AG04450 (cell line): ENCODE measurements at regions of chr11 and their contacts with region 1.

Region 1: GRCh38 chr11:10307442-10308207 is 2.8 kb downstream of the ADM start:
- DNase-seq: peak; percentile 76
- H3K4me3 ChIP-seq: peak overlapping the region; percentile 77
- H3K27ac ChIP-seq: peak overlapping the region; percentile 89
- H3K27me3 ChIP-seq: no peaks in the 10 kb centered on the region
- CTCF ChIP-seq: peak; percentile 94

Region 2: DNA sequence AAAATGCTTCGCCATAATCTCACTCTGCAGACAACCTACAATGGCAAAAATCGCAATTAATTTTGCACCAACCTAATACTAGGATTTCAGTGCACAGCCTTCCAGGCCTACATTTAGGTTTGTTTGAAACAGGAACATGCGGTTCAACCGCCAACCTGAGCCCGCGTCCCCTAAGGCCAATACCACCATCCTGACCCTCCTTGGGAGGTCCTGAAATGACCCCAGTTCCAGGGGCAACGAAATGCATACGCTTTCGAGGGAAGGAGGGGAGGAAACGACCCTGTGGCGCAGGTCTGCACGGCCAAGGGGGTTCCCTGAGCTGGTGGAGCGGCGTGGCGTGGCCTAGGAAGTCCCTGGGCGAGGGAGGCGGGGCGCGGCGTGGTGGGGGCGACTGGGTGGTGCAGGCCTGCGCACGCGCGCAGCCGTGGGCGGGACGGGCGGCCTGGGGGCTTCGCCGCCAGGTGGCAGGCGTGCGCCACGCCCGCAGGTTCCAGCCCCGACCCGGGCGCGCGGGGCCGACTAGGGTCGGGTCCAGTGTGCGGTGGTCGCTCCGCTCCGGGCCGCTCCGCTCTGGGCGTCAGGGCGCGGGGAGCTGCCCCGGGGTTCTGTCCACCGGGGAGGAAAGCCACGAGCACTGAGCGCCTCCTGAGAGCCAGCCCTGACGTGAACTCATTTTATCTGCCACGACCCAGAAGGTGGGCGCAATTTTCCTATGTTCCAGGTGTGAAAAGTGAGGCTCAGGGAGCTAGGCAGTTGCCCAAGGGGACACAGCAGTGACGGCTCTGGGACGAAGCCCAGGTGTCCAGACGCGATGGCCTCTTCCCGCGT is 549.6 kb before region 1 on chr11:
- CTCF ChIA-PET with region 1: interaction called, 3 read pairs
- POLR2A ChIA-PET with region 1: interaction called, 65 read pairs
- DNase-seq: no peak
- H3K4me3 ChIP-seq: peak overlapping the region; percentile 45
- H3K27ac ChIP-seq: peak overlapping the region; percentile 95
- H3K27me3 ChIP-seq: no peaks in the 10 kb centered on the region
- CTCF ChIP-seq: peak; percentile 51

Region 3: GRCh38 chr11:9906043-9906791 is 401.4 kb before region 1 on chr11:
- CTCF ChIA-PET with region 1: no interaction called
- POLR2A ChIA-PET with region 1: interaction called, 12 read pairs
- DNase-seq: peak; percentile 79
- H3K4me3 ChIP-seq: no peak overlapping the region
- H3K27ac ChIP-seq: no peak overlapping the region
- H3K27me3 ChIP-seq: no peaks in the 10 kb centered on the region
- CTCF ChIP-seq: no peak

Region 4: GRCh38 chr11:10208131-10208575 is 99.5 kb before region 1 on chr11:
- CTCF ChIA-PET with region 1: interaction called, 33 read pairs
- POLR2A ChIA-PET with region 1: interaction called, 29 read pairs
- DNase-seq: no peak
- H3K4me3 ChIP-seq: no peak overlapping the region
- H3K27ac ChIP-seq: no peak overlapping the region
- H3K27me3 ChIP-seq: no peaks in the 10 kb centered on the region
- CTCF ChIP-seq: peak; percentile 74

Region 5: DNA sequence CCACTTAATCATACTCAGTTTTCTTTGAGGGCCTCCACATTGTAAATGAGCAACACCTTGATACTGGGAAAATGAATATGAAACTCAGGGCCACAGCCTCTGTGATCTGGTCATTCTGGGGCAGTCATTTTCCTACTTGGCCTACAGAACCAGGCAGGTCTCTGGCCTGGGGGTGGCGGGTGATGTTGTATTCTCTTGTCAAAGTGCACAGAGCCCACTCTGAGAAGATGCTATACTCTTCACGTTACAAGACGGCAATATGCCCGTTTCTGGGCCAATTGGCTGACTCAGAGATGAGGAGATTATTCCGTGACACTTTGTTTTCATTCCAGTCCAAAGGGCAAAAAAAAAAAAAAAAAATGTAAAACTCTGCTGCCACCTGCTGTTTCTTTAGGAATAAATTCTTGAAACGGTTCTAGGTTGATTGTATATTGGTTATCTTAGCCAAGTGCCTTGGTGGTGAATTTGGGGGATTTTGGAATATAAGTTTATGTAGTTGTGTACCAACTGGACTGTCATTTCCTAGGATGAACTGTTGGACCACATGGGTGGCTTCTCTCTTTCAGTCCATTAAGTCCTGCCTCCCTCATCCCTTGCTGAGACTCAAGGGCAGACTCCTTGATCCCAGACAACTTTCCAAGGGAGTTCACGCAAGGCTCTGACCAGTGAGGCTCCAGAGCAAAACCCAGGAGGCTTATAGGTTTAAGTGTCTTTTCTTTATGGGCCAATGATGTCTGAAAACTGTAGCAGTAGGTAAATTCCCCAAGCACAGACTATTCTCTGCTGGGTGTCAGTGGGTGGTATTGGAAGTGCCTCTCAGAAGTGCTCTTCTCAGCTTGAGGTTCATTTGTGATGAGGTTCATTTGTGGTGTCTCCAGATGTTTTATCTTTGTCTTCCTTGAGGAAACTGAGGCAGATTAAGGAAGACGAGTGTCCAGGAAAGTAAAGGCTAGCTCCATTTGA is 15.5 kb after region 1 on chr11:
- CTCF ChIA-PET with region 1: interaction called, 3 read pairs
- POLR2A ChIA-PET with region 1: interaction called, 47 read pairs
- DNase-seq: no peak
- H3K4me3 ChIP-seq: no peak overlapping the region
- H3K27ac ChIP-seq: peak overlapping the region; percentile 68
- H3K27me3 ChIP-seq: no peaks in the 10 kb centered on the region
- CTCF ChIP-seq: peak; percentile 59

Region 6: DNA sequence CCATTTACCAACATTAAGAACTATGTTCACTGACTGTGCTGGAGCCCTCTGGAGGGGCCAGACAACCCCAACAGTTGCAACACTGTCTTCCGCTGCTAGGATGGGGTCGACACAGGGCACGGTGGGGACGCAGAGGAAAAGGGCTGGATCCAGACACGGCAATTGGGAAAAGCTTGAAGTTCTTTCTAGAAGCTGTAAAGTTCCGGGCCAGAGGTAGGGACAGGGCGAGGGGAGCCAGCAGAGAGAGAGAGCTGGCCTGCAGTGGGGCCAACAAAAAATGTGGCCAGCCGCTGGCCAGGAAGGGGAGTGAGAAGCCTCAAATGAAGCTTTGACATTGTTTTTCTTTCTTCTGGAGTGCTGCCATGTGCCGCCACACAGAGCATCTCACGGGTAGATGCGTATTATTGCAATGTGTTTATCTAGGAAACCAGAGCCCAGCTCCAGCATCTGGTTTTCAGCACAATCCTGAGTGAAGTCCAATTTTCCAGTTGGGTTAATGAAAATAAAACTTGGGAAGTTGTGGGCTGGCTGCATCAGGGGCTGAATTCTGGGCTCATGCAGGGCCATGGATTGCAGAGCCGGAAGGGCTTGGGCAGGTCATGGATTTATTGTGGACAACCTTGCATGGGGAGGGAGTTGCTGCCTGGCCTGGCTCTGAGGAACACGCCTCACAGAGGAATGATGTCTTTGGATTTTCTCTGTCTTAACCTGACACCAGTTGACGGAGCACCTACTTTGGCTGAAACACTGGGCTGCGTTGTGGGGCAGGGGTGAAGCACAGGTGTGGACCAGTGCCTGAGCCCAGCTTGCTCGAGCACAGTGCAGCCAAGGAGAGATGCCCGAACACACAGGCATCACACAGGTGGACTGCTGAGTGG is 79.8 kb after region 1 on chr11:
- CTCF ChIA-PET with region 1: no interaction called
- POLR2A ChIA-PET with region 1: interaction called, 12 read pairs
- DNase-seq: peak; percentile 92
- H3K4me3 ChIP-seq: no peak overlapping the region
- H3K27ac ChIP-seq: peak overlapping the region; percentile 93
- H3K27me3 ChIP-seq: no peaks in the 10 kb centered on the region
- CTCF ChIP-seq: peak; percentile 11; the same call in 1 of the 2 replicates